ENCODE measurements at regions of chr1 and their contacts with region 1.

Region 1: DNA sequence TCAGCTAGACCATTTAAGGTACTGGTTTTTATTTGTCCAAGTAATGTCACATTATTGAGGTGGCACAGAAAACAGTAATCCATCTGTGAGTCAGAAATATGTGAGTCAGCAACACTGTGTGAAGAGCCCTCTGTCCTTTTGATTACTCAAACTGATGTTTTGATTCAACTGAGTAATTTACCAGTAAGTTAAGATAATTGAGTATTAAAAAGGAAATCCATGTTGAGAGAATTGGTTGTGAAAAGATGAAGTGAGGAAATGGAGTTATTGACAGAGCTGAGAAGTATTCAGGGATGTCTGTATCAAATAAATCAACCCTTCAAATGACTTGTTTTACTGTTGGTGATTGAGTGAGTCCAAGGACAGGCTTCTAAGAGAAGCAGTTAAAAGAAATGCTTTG is 302.7 kb upstream of the SGIP1 start:
- DNase-seq: no peak
- ATAC-seq: peak; percentile 97
- H3K4me3 Mint-ChIP-seq: no peak overlapping the region
- H3K27ac Mint-ChIP-seq: no peak overlapping the region
- H3K4me1 Mint-ChIP-seq: peaks cover 15% of the 10 kb centered on the region
- H3K27me3 Mint-ChIP-seq: peaks cover 6% of the 10 kb centered on the region

Region 2: DNA sequence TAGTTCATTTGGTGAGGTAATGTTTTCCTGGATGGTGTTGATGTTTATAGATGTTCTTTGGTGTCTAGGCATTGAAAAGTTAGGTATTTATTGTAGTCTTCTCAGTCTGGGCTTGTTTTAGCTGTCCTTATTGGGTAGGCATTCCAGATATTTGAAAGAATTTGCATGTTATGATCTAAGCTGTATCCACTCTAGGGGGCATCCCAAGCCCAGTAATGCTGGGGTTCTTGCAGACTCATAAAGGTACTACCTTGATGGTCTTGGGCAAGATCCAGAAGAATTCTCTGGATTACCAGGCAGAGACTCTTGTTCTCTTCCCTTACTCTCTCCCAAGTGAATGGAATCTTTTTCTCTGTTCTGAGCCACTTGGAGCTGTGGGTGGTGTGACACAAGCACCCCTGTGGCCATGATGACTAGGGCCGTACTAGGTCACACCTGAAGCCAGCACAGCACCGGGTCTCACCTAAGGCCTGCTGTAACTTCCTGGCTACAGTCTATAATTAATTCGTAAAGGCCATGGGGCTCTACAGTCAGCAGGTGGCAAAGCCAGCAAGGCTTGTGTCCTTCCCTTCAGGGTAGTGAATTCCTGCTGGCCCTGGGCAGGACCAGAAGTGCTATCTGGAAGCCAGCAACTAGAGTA is 513.3 kb before region 1 on chr1:
- CTCF ChIA-PET with region 1: no interaction called
- POLR2A ChIA-PET with region 1: no interaction called
- intact Hi-C with region 1: loop called in 1 of 2 experiments (anchors 10 kb)
- DNase-seq: peak; percentile 31
- ATAC-seq: no peak
- H3K4me3 Mint-ChIP-seq: no peak overlapping the region
- H3K27ac Mint-ChIP-seq: no peak overlapping the region
- H3K4me1 Mint-ChIP-seq: no peaks in the 10 kb centered on the region
- H3K27me3 Mint-ChIP-seq: peaks cover 8% of the 10 kb centered on the region

Region 3: DNA sequence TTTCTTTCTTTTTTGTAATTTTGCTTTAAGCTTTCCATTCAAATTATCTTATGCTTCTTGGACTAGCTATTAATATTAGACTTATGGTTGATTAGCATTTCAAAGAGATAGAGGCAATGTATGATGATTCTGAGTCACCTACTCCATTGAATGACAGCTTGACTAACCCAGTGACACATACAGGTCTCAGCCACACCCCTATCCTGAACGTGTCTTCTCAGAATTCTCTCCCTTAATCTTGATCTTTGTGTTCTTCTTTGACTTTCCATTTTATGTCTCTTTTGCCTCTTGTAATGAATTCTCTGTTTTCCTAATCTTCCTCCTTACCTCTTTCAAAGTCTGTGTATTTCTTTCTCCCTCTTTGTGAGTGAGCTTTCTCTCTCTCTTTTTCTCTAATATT is 197.4 kb before region 1 on chr1:
- CTCF ChIA-PET with region 1: no interaction called
- POLR2A ChIA-PET with region 1: no interaction called
- intact Hi-C with region 1: no loop called
- DNase-seq: no peak
- ATAC-seq: no peak
- H3K4me3 Mint-ChIP-seq: no peak overlapping the region
- H3K27ac Mint-ChIP-seq: no peak overlapping the region
- H3K4me1 Mint-ChIP-seq: no peaks in the 10 kb centered on the region
- H3K27me3 Mint-ChIP-seq: peaks cover 6% of the 10 kb centered on the region

Measured in activated CD4-positive, alpha-beta T cell treated with anti-CD3 and anti-CD28 coated beads for 36 hours (primary cell).